ENCODE measurements at regions of chr14 and their contacts with region 1.

Region 1: DNA sequence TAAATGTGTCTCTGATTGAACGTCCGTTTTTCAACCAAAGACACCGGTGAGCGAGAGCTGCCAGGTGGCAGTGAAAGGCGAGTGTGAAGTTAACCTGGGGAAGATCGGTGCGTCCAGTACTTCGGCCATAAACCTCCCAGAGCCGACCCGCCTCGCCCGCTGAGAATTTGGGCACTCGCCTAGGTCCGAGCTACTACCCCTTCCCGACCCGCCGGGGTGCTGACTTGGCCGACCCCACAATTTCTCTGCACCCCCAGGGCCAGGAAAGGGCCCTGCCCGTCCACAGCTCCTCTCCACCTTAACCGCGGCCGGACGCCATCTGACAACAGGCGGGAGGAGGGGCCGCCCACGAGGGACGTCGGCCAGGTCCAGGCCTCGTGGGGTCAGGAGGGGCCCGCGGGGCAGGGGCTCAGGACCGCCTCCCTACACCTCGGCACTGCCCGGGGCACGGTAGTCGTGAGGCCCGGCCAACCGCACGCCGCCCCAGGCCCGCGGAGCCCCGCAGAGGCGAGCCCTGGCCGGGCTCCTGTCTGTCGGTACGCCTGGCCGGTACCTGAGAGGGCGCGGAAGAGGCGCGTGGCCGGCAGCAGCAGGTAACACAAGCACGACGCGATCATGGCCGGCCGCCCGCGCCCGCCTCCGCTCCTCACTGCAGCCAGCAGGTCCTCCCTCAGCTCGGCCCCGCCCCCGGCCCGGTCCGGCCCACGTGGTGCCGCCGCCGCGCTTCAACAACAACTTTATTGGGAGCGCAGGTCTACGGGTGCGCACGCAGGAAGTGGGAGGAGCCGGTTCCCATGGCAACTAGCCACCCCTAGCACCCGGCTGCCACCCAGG is at the start of gene ANGEL1:
- DNase-seq: peak; percentile 98
- H3K4me3 Mint-ChIP-seq: peak within 1 kb of the TSS; percentile 90
- H3K27ac Mint-ChIP-seq: peak within 1 kb of the TSS; percentile 81
- H3K4me1 Mint-ChIP-seq: peaks cover 21% of the 10 kb centered on the region
- H3K27me3 Mint-ChIP-seq: no peaks in the 10 kb centered on the region

Region 2: GRCh38 chr14:76715511-76716081 is 96.8 kb before region 1 on chr14:
- CTCF ChIA-PET with region 1: interaction called, 88 read pairs
- DNase-seq: no peak
- H3K4me3 Mint-ChIP-seq: no peak overlapping the region
- H3K27ac Mint-ChIP-seq: no peak overlapping the region
- H3K4me1 Mint-ChIP-seq: no peaks in the 10 kb centered on the region
- H3K27me3 Mint-ChIP-seq: peaks cover 39% of the 10 kb centered on the region